Naive thymus-derived CD4-positive, alpha-beta T cell (primary cell): ENCODE measurements at regions of chr10 and their contacts with region 1.

Region 1: GRCh38 chr10:11178606-11179515 is 161.2 kb downstream of the CELF2 start:
- DNase-seq: peak; percentile 49 to 93 (median 80)
- ATAC-seq: peak; percentile 90
- H3K4me3 ChIP-seq: peak overlapping the region; percentile 50
- H3K4me3 Mint-ChIP-seq: peak overlapping the region in 4 of 10 donors; percentile 66 to 83 (median 82)
- H3K27ac ChIP-seq: peak overlapping the region; percentile 95
- H3K27ac Mint-ChIP-seq: peak overlapping the region in 6 of 9 donors; percentile 92 to 98 (median 95)
- H3K4me1 ChIP-seq: peaks cover 90 to 96% of the 10 kb centered on the region in 2 donors
- H3K4me1 Mint-ChIP-seq: peaks cover 0 to 99% (median 30%) of the 10 kb centered on the region in 7 donors
- H3K27me3 ChIP-seq: no peaks in the 10 kb centered on the region
- H3K27me3 Mint-ChIP-seq: peaks cover 0 to 3% (median 0%) of the 10 kb centered on the region in 5 donors

Region 2: GRCh38 chr10:10551596-10552301 is 627.1 kb before region 1 on chr10:
- CTCF ChIA-PET with region 1: no interaction called
- POLR2A ChIA-PET with region 1: no interaction called
- intact Hi-C with region 1: no loop called
- DNase-seq: no peak
- ATAC-seq: no peak
- H3K4me3 ChIP-seq: no peak overlapping the region
- H3K4me3 Mint-ChIP-seq: no peak overlapping the region
- H3K27ac ChIP-seq: no peak overlapping the region
- H3K27ac Mint-ChIP-seq: no peak overlapping the region
- H3K4me1 ChIP-seq: no peaks in the 10 kb centered on the region
- H3K4me1 Mint-ChIP-seq: no peaks in the 10 kb centered on the region
- H3K27me3 ChIP-seq: no peaks in the 10 kb centered on the region
- H3K27me3 Mint-ChIP-seq: peaks cover 0 to 18% (median 5%) of the 10 kb centered on the region in 5 donors

Region 3: GRCh38 chr10:11045995-11046775 is 132.7 kb before region 1 on chr10:
- CTCF ChIA-PET with region 1: no interaction called
- POLR2A ChIA-PET with region 1: no interaction called
- intact Hi-C with region 1: no loop called
- DNase-seq: no peak
- ATAC-seq: no peak
- H3K4me3 ChIP-seq: no peak overlapping the region
- H3K4me3 Mint-ChIP-seq: no peak overlapping the region
- H3K27ac ChIP-seq: no peak overlapping the region
- H3K27ac Mint-ChIP-seq: no peak overlapping the region
- H3K4me1 ChIP-seq: no peaks in the 10 kb centered on the region
- H3K4me1 Mint-ChIP-seq: peaks cover 0 to 11% (median 4%) of the 10 kb centered on the region in 7 donors
- H3K27me3 ChIP-seq: no peaks in the 10 kb centered on the region
- H3K27me3 Mint-ChIP-seq: peaks cover 0 to 63% (median 9%) of the 10 kb centered on the region in 5 donors

Region 4: GRCh38 chr10:11145495-11145855 is 33.4 kb before region 1 on chr10:
- CTCF ChIA-PET with region 1: interaction called, 5 read pairs
- POLR2A ChIA-PET with region 1: interaction called, 919 read pairs
- intact Hi-C with region 1: loop called (anchors 1 kb)
- DNase-seq: peak; percentile 31 to 85 (median 81)
- ATAC-seq: peak; percentile 75
- H3K4me3 ChIP-seq: peak overlapping the region; percentile 48
- H3K4me3 Mint-ChIP-seq: peak overlapping the region; percentile 73 to 91 (median 80)
- H3K27ac ChIP-seq: peak overlapping the region; percentile 94
- H3K27ac Mint-ChIP-seq: peak overlapping the region; percentile 97 to 99 (median 99)
- H3K4me1 ChIP-seq: peaks cover 79 to 95% of the 10 kb centered on the region in 2 donors
- H3K4me1 Mint-ChIP-seq: peaks cover 73 to 100% (median 93%) of the 10 kb centered on the region in 7 donors
- H3K27me3 ChIP-seq: no peaks in the 10 kb centered on the region
- H3K27me3 Mint-ChIP-seq: no peaks in the 10 kb centered on the region

Region 5: GRCh38 chr10:11209830-11210181 is 30.9 kb after region 1 on chr10:
- CTCF ChIA-PET with region 1: interaction called, 4 read pairs
- POLR2A ChIA-PET with region 1: interaction called, 6 read pairs
- intact Hi-C with region 1: loop called (anchors 1 to 2 kb)
- DNase-seq: peak in 4 of 9 donors; percentile 26 to 44 (median 31)
- ATAC-seq: no peak
- H3K4me3 ChIP-seq: peak overlapping the region; percentile 39
- H3K4me3 Mint-ChIP-seq: peak overlapping the region; percentile 73 to 89 (median 82)
- H3K27ac ChIP-seq: peak overlapping the region; percentile 70
- H3K27ac Mint-ChIP-seq: peak overlapping the region; percentile 81 to 94 (median 87)
- H3K4me1 ChIP-seq: peaks cover 75 to 93% of the 10 kb centered on the region in 2 donors
- H3K4me1 Mint-ChIP-seq: peaks cover 76 to 100% (median 98%) of the 10 kb centered on the region in 7 donors
- H3K27me3 ChIP-seq: no peaks in the 10 kb centered on the region
- H3K27me3 Mint-ChIP-seq: no peaks in the 10 kb centered on the region

Region 6: GRCh38 chr10:11236234-11236633 is 57.4 kb after region 1 on chr10:
- CTCF ChIA-PET with region 1: no interaction called
- POLR2A ChIA-PET with region 1: interaction called, 3 read pairs
- intact Hi-C with region 1: loop called in 1 of 2 experiments (anchors 1 kb)
- DNase-seq: peak in 6 of 9 donors; percentile 29 to 56 (median 48)
- ATAC-seq: peak; percentile 83
- H3K4me3 ChIP-seq: no peak overlapping the region
- H3K4me3 Mint-ChIP-seq: peak overlapping the region in 9 of 10 donors; percentile 44 to 68 (median 63)
- H3K27ac ChIP-seq: peak overlapping the region; percentile 44
- H3K27ac Mint-ChIP-seq: peak overlapping the region; percentile 26 to 92 (median 77)
- H3K4me1 ChIP-seq: peaks cover 61 to 82% of the 10 kb centered on the region in 2 donors
- H3K4me1 Mint-ChIP-seq: peaks cover 69 to 94% (median 92%) of the 10 kb centered on the region in 7 donors
- H3K27me3 ChIP-seq: no peaks in the 10 kb centered on the region
- H3K27me3 Mint-ChIP-seq: no peaks in the 10 kb centered on the region

Region 7: DNA sequence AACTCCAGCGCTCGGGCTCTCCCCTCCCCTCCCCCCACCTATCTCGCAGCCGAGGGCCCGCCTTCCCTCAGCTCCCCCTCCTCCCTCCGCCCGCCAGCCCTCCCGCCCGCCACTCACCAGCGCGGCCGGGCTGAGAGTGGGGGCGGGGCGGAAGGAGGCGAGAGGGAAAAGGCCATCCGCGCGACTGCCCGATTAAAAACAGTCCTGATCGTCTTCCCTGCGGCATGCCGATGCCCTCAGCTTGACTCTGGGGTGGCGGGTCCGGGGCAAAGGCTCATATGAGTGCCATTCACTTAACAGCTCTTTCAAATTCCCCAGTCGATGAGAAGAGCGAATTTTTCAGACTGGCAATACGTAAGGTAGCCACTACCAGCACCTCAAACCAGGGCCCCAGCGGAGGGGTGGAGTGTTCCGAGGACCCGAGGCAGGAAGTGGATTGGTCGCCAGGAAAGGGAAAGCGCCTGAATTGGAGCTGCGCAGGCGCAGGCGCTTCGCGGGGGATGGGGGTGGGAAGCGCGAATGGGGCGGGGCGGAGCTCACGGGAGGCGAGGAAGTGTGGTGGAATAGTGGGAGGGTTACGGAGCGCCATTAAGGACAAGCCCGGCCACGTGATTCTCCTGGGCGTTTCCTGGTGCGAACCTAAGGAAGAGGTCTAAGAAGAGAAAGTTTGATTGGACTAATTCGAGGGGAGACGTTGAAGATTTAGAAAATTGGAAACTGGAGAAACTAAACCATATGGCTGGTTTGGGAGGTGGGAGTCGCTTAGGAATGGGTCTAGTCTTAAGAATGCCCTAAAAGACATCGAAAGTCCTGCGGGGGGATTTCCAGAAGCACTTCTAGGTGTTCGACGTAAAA is 864.2 kb after region 1 on chr10 and contains the start of gene UPF2:
- CTCF ChIA-PET with region 1: no interaction called
- POLR2A ChIA-PET with region 1: no interaction called
- intact Hi-C with region 1: loop called in 1 of 2 experiments (anchors 10 kb)
- DNase-seq: peak; percentile 95 to 98 (median 97)
- ATAC-seq: peak; percentile 93
- H3K4me3 ChIP-seq: peak within 1 kb of the TSS; percentile 83
- H3K4me3 Mint-ChIP-seq: peak within 1 kb of the TSS; percentile 87 to 100 (median 95)
- H3K27ac ChIP-seq: peak within 1 kb of the TSS; percentile 92
- H3K27ac Mint-ChIP-seq: peak within 1 kb of the TSS; percentile 98 to 100 (median 99)
- H3K4me1 ChIP-seq: peaks cover 10 to 16% of the 10 kb centered on the region in 2 donors
- H3K4me1 Mint-ChIP-seq: peaks cover 13 to 47% (median 40%) of the 10 kb centered on the region in 7 donors
- H3K27me3 ChIP-seq: no peaks in the 10 kb centered on the region
- H3K27me3 Mint-ChIP-seq: peaks cover 0 to 3% (median 0%) of the 10 kb centered on the region in 5 donors
- total RNA-seq, gene UPF2: 27.2 to 40.5 (median 36.3) TPM